ENCODE measurements at regions of chr11 and their contacts with region 1.

Region 1: DNA sequence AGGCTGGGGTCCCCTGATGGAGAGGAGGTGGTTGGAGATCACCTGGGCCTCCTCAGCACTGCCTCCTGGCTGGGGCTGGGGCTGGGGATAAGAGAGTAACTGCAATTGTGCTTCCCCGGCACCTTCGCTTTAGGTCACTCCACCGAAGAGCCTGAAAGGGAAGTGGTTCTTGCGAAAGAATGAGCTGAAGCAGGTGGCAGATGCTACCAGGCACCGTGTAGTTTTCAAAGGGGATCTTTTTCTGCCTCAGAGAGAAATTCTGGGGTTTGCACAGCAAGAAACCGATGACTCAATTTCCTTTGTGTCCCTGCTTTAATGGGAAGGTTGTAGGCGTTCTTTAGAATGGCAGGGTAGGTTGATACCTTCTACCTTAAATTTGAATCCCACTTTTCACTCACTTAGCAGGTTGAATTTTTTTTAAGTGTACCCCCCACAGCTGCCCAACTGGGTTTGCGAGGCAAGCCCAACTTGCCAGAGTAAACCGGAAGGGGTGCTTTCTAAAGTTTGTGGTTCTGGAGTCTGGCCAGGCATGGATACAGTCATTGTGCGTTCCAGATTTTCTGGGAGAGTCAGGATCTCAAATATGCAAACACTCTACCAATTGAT is 5.3 kb downstream of the CD44 start:
- DNase-seq: no peak

Region 2: DNA sequence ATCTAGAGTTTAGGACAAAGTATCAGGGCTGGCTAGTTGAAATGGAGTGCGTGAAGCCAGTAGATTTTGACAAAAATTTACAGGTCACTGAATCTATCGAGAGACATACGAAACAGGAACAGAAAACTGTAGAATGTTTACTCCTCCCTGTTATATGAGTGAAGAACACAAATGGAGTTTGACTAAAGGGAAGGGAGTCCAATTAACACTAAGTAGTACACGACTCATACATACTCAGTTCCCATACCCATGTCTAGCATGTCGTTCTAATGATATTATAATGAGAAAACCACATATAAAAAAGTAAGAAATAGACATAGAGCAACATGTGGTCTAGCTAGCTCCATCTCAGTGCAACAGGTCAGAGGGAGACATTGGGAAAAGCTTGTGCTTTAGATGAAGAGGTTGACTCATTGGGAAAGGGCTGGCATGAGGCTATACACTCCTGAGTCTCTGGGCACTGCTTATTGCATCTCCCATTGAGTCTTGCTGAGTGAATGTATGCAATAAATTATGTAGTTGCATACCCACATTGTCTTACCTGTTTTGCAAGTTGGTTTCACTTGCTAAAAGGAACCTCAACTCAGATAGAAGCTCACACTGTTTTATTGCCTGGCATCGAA is 38.2 kb after region 1 on chr11:
- intact Hi-C with region 1: loop called (anchors 5 kb)
- DNase-seq: no peak

Measured in cardiac septum (tissue), 1 donor.